Endothelial cell of umbilical vein (primary cell): ENCODE measurements at regions of chr19 and their contacts with region 1.

Region 1: DNA sequence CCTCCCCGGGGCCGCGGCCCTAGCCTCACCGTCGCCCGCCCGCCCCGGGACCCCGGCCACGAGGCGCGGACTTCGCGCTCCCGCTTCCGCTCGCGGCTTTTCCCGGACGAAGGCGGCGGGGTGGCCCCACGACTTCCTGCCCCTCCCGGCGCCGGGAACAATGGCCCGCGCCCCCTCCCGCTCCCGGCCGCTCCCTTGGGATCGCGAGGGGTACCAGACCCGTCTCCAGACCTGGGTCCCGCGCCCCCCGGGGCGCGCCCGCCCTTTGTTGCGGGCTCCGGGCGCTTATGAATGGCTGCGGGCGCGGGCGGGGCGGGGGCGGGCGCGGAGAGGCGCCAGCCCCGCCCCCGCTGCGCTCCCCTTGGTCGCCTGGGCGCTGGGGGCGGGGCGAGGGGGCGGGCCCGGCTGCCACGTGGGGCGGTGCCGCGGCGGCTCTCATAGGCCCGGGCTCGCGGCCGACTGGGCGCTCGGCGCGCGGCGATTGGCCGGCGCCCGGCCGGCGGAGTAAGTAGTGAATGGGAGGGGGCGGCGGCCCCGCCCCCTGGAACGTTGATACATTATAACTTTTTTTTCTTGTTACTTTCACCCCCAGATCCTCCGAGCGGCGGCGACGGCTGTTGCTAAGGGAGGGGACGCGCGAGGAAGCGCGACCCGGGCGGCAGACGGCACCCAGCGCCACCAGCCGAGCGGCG is 1.1 kb downstream of the MIDN start:
- DNase-seq: peak; percentile 94
- H3K4me3 ChIP-seq: peak overlapping the region; percentile 57 to 85 (median 71)
- H3K27ac ChIP-seq: peak overlapping the region; percentile 99
- H3K4me1 ChIP-seq: peaks cover 24% of the 10 kb centered on the region
- H3K27me3 ChIP-seq: no peaks in the 10 kb centered on the region
- CTCF ChIP-seq: no peak
- POLR2A ChIP-seq: peak; percentile 78

Region 2: GRCh38 chr19:796692-797527 is 452.5 kb before region 1 on chr19 and contains the start of gene PTBP1:
- CTCF ChIA-PET with region 1: no interaction called
- POLR2A ChIA-PET with region 1: no interaction called
- dilution Hi-C with region 1: no loop called
- intact Hi-C with region 1: loop called (anchors 10 kb)
- DNase-seq: peak; percentile 100
- H3K4me3 ChIP-seq: peak within 1 kb of the TSS; percentile 84 to 93 (median 87)
- H3K27ac ChIP-seq: peak within 1 kb of the TSS; percentile 73
- H3K4me1 ChIP-seq: peaks cover 33% of the 10 kb centered on the region
- H3K27me3 ChIP-seq: no peaks in the 10 kb centered on the region
- CTCF ChIP-seq: no peak
- POLR2A ChIP-seq: peak; percentile 88
- total RNA-seq, gene PTBP1: 607 and 623 TPM in 2 replicates

Region 3: GRCh38 chr19:1260636-1261537 is 11.4 kb after region 1 on chr19:
- CTCF ChIA-PET with region 1: interaction called, 1,001 read pairs
- POLR2A ChIA-PET with region 1: interaction called, 24 read pairs
- dilution Hi-C with region 1: no loop called
- intact Hi-C with region 1: loop called (anchors 1 kb)
- DNase-seq: peak; percentile 96
- H3K4me3 ChIP-seq: peak overlapping the region; percentile 19 to 50 (median 37)
- H3K27ac ChIP-seq: peak overlapping the region; percentile 78
- H3K4me1 ChIP-seq: peaks cover 55% of the 10 kb centered on the region
- H3K27me3 ChIP-seq: no peaks in the 10 kb centered on the region
- CTCF ChIP-seq: no peak
- POLR2A ChIP-seq: no peak